ENCODE measurements at regions of chr10 and their contacts with region 1.

Region 1: DNA sequence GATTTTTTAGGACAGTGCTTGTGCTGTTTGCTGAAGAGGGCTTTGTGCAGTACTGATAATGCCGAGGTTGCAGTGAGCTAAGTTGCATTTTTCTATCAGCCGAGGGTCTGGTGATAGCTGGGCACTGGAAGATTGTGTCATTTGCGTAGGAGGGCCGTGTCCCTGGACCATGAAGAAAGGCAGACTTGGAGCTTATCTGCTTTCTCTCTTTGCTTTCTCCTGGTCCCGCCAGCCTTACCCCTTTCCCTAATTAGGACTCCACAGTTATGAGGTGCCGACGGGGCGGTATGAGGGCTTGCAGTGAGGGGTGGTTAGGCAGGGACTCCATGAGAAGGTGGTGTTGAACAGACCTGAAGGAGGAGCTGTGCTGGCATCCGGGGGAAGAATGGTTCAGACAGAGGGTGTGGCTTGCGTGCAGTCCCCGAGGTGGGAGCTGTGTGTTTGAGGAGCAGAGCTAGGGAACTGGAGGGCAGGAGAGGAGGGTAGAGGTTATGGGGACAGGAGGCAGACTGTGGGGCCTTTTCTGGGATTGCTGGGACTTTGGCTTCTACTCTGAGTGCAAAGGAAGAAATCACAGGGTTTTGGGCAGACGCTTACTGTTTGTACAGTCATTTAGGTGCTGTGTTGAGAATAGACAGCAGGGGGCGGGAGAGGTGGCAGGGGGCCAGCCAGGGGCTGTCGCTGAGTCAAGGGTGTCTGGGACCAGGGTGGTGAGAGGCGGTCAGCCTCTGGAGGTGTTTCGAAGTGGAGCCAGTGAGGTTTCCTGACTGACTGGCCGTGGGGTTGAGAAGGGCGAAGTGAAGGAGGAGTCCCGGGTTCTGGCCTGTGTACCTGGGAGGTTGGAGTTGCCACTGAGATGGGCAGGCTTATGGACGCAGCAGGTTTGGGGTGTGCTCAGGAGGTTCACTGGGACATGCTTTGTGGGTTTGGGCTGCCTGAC is 43.4 kb downstream of the PRF1 start:
- DNase-seq: peak; percentile 78 to 85 (median 85)
- H3K4me3 ChIP-seq: peak overlapping the region in 5 of 7 experiments; percentile 30 to 79 (median 59)
- H3K27ac ChIP-seq: peak overlapping the region in 1 of 2 experiments; percentile 67
- H3K4me1 ChIP-seq: peaks cover 0 to 50% (median 13%) of the 10 kb centered on the region in 4 experiments
- H3K27me3 ChIP-seq: no peaks in the 10 kb centered on the region

Region 2: GRCh38 chr10:70440296-70441160 is 118.6 kb before region 1 on chr10:
- CTCF ChIA-PET with region 1: no interaction called
- POLR2A ChIA-PET with region 1: no interaction called
- DNase-seq: peak in 2 of 3 donors; percentile 46 to 55
- H3K4me3 ChIP-seq: peak overlapping the region in 5 of 7 experiments; percentile 11 to 61 (median 50)
- H3K27ac ChIP-seq: no peak overlapping the region
- H3K4me1 ChIP-seq: peaks cover 0 to 17% (median 13%) of the 10 kb centered on the region in 4 experiments
- H3K27me3 ChIP-seq: peaks cover 0 to 60% (median 37%) of the 10 kb centered on the region in 5 experiments

Region 3: DNA sequence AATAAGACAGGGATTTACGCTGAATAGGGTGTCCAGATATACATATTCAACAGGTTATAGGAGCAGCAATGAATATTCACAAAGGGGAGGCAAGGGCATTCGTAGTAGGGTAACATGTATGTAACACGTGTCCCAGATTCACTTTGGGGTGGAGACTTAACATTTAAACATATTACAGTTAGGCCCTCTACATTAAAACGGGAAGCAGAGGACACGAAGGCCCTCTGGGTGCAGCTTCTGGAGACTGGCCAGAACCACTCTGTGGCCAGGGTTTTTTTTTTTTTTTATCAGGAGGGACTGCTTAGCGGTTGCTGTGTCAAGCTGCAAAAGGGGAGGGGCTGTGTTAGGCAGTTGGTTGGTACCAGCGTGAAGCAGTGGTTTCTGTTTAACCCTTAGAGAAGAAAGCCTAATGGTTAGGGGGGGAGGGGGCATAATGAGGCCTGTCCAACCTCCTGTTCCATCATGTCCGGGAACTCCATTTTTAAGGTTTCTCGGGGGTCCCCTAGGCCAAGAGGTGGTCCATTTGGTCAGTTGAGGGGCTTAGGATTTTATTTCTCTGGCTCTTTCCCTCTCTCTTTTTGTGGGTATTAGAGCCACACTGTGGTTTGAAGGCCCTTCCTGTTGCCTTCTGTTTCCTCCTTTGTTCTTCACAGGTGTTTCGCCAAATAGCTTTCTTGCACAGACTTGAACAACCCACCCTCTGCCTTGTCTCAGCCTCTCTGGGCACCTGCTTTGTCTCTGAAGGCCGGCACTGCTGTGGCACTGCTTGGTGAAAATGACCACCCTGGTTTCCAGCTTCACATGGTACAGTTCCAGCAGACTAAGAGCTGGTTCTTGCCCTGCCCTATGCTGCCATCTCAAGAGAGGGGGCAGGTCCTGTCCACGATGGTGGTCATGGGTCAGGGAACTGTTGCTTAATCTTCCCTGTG is 17.0 kb after region 1 on chr10:
- CTCF ChIA-PET with region 1: interaction called, 31 read pairs
- POLR2A ChIA-PET with region 1: interaction called, 4 read pairs
- DNase-seq: peak; percentile 94 to 98 (median 98)
- H3K4me3 ChIP-seq: peak overlapping the region in 4 of 7 experiments; percentile 5 to 60 (median 18)
- H3K27ac ChIP-seq: no peak overlapping the region
- H3K4me1 ChIP-seq: peaks cover 31 to 73% (median 48%) of the 10 kb centered on the region in 4 experiments
- H3K27me3 ChIP-seq: no peaks in the 10 kb centered on the region

Region 4: GRCh38 chr10:70592746-70593512 is 33.8 kb after region 1 on chr10:
- CTCF ChIA-PET with region 1: interaction called, 13 read pairs
- POLR2A ChIA-PET with region 1: no interaction called
- DNase-seq: peak; percentile 71 to 98 (median 96)
- H3K4me3 ChIP-seq: no peak overlapping the region
- H3K27ac ChIP-seq: no peak overlapping the region
- H3K4me1 ChIP-seq: peaks cover 6 to 93% (median 38%) of the 10 kb centered on the region in 4 experiments
- H3K27me3 ChIP-seq: no peaks in the 10 kb centered on the region

Region 5: GRCh38 chr10:70880077-70880534 is 321.0 kb after region 1 on chr10:
- CTCF ChIA-PET with region 1: interaction called, 140 read pairs
- POLR2A ChIA-PET with region 1: no interaction called
- DNase-seq: peak; percentile 82 to 91 (median 86)
- H3K4me3 ChIP-seq: no peak overlapping the region
- H3K27ac ChIP-seq: no peak overlapping the region
- H3K4me1 ChIP-seq: no peaks in the 10 kb centered on the region
- H3K27me3 ChIP-seq: no peaks in the 10 kb centered on the region

Measured in common myeloid progenitor, CD34-positive (primary cell).